ENCODE measurements at regions of chr15 and their contacts with region 1.

Region 1: GRCh38 chr15:100349696-100350433 is 8.1 kb upstream of the ADAMTS17 start:
- DNase-seq: peak; percentile 94 to 97
- ATAC-seq: peak; percentile 95 to 97 (median 96)
- H3K4me3 ChIP-seq: peak overlapping the region; percentile 79
- H3K27ac ChIP-seq: peak overlapping the region; percentile 94
- H3K4me1 ChIP-seq: no peaks in the 10 kb centered on the region
- H3K27me3 ChIP-seq: no peaks in the 10 kb centered on the region
- CTCF ChIP-seq: peak; percentile 83

Region 2: DNA sequence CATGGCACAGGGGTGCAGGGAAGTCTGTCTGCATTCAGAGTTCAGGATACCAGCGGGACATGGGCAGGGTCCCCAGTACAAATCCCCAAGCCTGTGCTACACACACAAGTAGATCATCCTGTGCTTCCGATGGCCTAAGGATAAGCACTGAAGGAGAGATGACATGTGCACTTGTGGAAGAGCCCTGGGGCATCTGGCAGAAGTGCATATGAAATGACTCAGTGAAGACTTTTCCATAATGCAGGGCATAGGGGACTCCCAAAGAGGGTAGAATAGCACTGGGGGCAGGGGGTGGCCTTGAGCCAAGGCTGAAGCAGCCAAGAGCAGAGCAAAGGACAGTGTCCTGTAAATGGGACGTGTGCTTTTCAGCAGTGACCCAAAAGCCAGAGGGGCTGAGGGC is 31.0 kb before region 1 on chr15:
- intact Hi-C with region 1: no loop called
- DNase-seq: no peak
- ATAC-seq: peak in 1 of 4 donors; percentile 45
- H3K4me3 ChIP-seq: no peak overlapping the region
- H3K27ac ChIP-seq: no peak overlapping the region
- H3K4me1 ChIP-seq: no peaks in the 10 kb centered on the region
- H3K27me3 ChIP-seq: no peaks in the 10 kb centered on the region
- CTCF ChIP-seq: no peak

Region 3: DNA sequence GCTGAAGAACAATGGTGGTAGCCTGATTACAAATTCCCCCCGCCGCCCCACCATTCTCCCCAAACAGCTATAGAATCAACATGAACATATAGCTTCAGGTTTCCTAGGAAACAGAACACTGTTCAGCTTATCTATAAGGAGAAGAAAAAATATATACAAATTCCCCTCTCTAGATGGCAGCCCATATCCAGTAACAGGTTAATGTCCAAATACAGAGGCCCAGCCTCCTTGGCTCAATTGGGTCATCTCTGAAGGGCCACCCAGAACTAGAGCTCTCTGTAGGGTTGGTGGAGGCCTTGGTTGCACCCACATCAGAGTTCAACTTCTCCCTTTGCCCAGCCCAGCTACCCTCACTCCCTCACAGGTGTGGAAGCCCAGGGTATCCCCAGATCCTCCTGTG is 83.4 kb after region 1 on chr15:
- intact Hi-C with region 1: loop called in 1 of 2 experiments (anchors 5 kb)
- DNase-seq: no peak
- ATAC-seq: peak in 3 of 4 donors; percentile 21 to 31 (median 26)
- H3K4me3 ChIP-seq: no peak overlapping the region
- H3K27ac ChIP-seq: peak overlapping the region; percentile 66
- H3K4me1 ChIP-seq: peaks cover 24% of the 10 kb centered on the region
- H3K27me3 ChIP-seq: no peaks in the 10 kb centered on the region
- CTCF ChIP-seq: no peak

Region 4: DNA sequence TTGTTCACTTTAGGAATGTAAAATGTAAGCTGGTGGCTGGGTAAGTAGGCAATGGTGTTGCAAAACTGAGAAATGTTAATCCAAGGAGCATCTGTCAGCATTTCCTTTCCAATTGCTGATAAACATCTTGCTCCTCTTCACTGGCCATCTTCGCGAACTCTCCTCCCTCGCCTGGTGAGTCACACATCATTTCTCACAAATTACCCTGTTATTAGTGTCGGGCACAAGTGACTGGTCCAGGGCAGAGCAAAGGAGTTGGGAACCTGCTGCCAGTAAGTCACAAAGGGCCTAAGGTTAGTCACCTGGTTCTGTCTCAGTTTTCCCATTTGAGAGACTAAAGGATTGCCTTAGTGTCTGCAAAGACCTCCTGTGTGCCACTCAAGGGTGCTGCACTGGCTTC is 165.9 kb after region 1 on chr15:
- intact Hi-C with region 1: loop called in 1 of 2 experiments (anchors 5 kb)
- DNase-seq: peak; percentile 22 to 53
- ATAC-seq: peak; percentile 57 to 71 (median 70)
- H3K4me3 ChIP-seq: no peak overlapping the region
- H3K27ac ChIP-seq: peak overlapping the region; percentile 92
- H3K4me1 ChIP-seq: peaks cover 36% of the 10 kb centered on the region
- H3K27me3 ChIP-seq: no peaks in the 10 kb centered on the region
- CTCF ChIP-seq: no peak

Region 5: GRCh38 chr15:100572362-100572983 is 222.6 kb after region 1 on chr15:
- intact Hi-C with region 1: loop called (anchors 2 to 5 kb)
- DNase-seq: no peak
- ATAC-seq: peak in 3 of 4 donors; percentile 25 to 69 (median 54)
- H3K4me3 ChIP-seq: no peak overlapping the region
- H3K27ac ChIP-seq: no peak overlapping the region
- H3K4me1 ChIP-seq: peaks cover 10% of the 10 kb centered on the region
- H3K27me3 ChIP-seq: no peaks in the 10 kb centered on the region
- CTCF ChIP-seq: peak; percentile 71

Region 6: GRCh38 chr15:100602064-100602822 is 252.4 kb after region 1 on chr15 and contains the starts of genes ASB7 and LINS1:
- intact Hi-C with region 1: loop called in 1 of 2 experiments (anchors 1 kb)
- DNase-seq: peak; percentile 100
- ATAC-seq: peak; percentile 97 to 98 (median 97)
- H3K4me3 ChIP-seq: peak within 1 kb of the TSS; percentile 98
- H3K27ac ChIP-seq: peak within 1 kb of the TSS; percentile 84
- H3K4me1 ChIP-seq: peaks cover 26% of the 10 kb centered on the region
- H3K27me3 ChIP-seq: no peaks in the 10 kb centered on the region
- CTCF ChIP-seq: no peak
- total RNA-seq, gene ASB7: 5.1 to 6.9 (median 5.5) TPM
- total RNA-seq, gene LINS1: 6.5 to 11.7 (median 9.8) TPM